Esophagus muscularis mucosa (tissue), 4 donors: ENCODE measurements at regions of chr15 and their contacts with region 1.

Region 1: GRCh38 chr15:82749951-82750830 is 40.5 kb upstream of the AP3B2 start:
- DNase-seq: peak; percentile 96
- H3K4me3 ChIP-seq: peak overlapping the region; percentile 70 to 93 (median 82)
- H3K27ac ChIP-seq: peak overlapping the region; percentile 87 to 90 (median 89)
- H3K4me1 ChIP-seq: peaks cover 17 to 44% (median 24%) of the 10 kb centered on the region in 4 donors
- H3K27me3 ChIP-seq: no peaks in the 10 kb centered on the region
- CTCF ChIP-seq: peak in 1 of 3 experiments; percentile 8
- EP300 ChIP-seq: no peak
- POLR2A ChIP-seq: peak; percentile 56

Region 2: GRCh38 chr15:82540055-82540983 is 209.9 kb before region 1 on chr15 and contains the start of gene RPS17:
- intact Hi-C with region 1: loop called (anchors 5 kb)
- DNase-seq: peak; percentile 98
- H3K4me3 ChIP-seq: peak within 1 kb of the TSS; percentile 82 to 89 (median 84)
- H3K27ac ChIP-seq: peak within 1 kb of the TSS; percentile 88 to 96 (median 94)
- H3K4me1 ChIP-seq: peaks cover 29 to 40% (median 35%) of the 10 kb centered on the region in 4 donors
- H3K27me3 ChIP-seq: no peaks in the 10 kb centered on the region
- CTCF ChIP-seq: peak; percentile 97 to 100 (median 99)
- EP300 ChIP-seq: no peak
- POLR2A ChIP-seq: peak; percentile 85
- total RNA-seq, gene RPS17: 1,410 to 2,934 (median 1,998) TPM

Region 3: DNA sequence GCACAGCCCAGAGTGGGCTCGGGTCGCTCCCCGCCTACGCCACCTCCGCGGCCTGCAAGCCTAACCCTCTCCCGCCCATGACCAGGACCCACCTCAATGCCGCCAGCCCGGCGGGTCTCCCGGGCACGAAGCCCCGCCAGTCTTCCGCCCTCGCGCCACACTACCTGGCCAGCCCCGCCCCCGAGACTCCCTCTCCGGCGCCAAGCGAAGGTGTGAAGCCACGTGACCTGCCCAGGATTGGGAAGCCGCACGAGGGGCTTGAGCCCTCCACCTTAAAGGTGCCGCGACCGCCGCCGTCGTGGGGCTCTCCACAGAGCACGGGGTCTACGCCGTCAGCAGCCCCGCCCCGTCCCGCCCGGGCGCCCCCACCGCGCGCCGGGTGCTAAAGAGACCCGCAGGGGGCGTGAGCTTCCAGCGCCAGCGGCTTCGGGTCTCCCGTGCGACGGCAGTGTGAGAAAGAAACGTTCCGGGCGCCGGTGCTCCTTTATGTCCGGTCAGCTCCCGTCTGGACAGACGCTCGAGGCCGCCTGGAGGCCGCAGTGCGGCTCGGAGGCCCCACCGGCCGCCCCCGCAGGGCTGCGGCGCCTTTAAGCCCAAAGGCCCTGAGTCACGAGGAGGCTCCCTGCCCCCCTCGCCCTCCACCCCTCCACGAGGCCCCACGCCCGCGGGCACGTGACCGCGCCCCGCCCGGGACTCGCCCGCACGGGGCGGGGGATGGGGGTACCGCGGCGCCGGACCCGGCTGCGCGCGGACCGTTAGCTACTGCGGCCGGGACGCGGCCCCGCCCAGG is 103.0 kb before region 1 on chr15 and contains the start of gene CPEB1:
- intact Hi-C with region 1: loop called (anchors 5 kb)
- DNase-seq: no peak
- H3K4me3 ChIP-seq: peak within 1 kb of the TSS; percentile 65 to 85 (median 70)
- H3K27ac ChIP-seq: peak within 1 kb of the TSS; percentile 59 to 72 (median 66)
- H3K4me1 ChIP-seq: peaks cover 17 to 32% (median 30%) of the 10 kb centered on the region in 4 donors
- H3K27me3 ChIP-seq: peaks cover 0 to 50% (median 17%) of the 10 kb centered on the region in 4 donors
- CTCF ChIP-seq: peak in 1 of 3 experiments; percentile 9
- EP300 ChIP-seq: no peak
- POLR2A ChIP-seq: no peak
- total RNA-seq, gene CPEB1: 5.6 to 8.1 (median 5.9) TPM

Region 4: GRCh38 chr15:82809404-82810060 is 59.3 kb after region 1 on chr15 and contains the start of gene WHAMM:
- intact Hi-C with region 1: loop called (anchors 2 kb)
- DNase-seq: peak; percentile 100
- H3K4me3 ChIP-seq: peak within 1 kb of the TSS; percentile 84 to 98 (median 94)
- H3K27ac ChIP-seq: peak within 1 kb of the TSS; percentile 99 to 100 (median 100)
- H3K4me1 ChIP-seq: peaks cover 19 to 36% (median 31%) of the 10 kb centered on the region in 4 donors
- H3K27me3 ChIP-seq: no peaks in the 10 kb centered on the region
- CTCF ChIP-seq: no peak
- EP300 ChIP-seq: no peak
- POLR2A ChIP-seq: peak; percentile 95
- total RNA-seq, gene WHAMM: 9.6 to 17.4 (median 14.2) TPM